Heart right ventricle (tissue), 16 donors: ENCODE measurements at regions of chr9 and their contacts with region 1.

Region 1: DNA sequence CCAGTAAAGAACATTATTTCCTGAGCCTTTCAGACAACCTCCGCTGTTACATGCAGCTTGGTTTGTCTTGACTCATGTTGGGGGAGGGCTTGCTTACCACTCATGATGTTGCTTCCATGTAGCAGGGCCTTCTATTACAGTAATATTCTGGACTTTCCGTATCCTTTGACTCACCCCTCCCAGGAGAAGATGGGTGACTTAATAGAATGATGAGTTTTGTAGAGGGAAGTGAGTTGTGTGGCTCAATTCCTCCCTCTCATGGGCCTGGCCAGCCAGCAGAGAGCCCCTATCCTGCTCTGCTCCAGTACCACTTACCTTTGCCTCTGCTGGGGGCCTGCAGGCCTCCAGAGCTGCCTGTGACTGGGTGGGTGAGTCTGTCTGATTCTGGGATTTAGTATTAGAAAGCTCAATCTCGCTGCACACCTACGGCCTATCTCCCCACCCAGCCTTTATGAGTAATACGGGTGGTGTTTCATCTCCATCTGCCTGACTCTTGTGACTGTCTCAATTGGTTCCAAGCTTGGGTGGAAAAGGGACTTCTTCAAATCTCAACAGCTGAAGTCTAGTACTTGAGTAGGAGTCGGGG is 52.6 kb upstream of the KLF9 start:
- DNase-seq: no peak
- ATAC-seq: peak in 2 of 8 donors; percentile 1 to 53
- H3K4me3 ChIP-seq: no peak overlapping the region
- H3K27ac ChIP-seq: peak overlapping the region in 3 of 10 donors; percentile 45 to 75 (median 65)
- H3K4me1 ChIP-seq: peaks cover 14 to 57% (median 36%) of the 10 kb centered on the region in 9 donors
- H3K27me3 ChIP-seq: no peaks in the 10 kb centered on the region
- CTCF ChIP-seq: peak in 1 of 9 donors; percentile 14

Region 2: DNA sequence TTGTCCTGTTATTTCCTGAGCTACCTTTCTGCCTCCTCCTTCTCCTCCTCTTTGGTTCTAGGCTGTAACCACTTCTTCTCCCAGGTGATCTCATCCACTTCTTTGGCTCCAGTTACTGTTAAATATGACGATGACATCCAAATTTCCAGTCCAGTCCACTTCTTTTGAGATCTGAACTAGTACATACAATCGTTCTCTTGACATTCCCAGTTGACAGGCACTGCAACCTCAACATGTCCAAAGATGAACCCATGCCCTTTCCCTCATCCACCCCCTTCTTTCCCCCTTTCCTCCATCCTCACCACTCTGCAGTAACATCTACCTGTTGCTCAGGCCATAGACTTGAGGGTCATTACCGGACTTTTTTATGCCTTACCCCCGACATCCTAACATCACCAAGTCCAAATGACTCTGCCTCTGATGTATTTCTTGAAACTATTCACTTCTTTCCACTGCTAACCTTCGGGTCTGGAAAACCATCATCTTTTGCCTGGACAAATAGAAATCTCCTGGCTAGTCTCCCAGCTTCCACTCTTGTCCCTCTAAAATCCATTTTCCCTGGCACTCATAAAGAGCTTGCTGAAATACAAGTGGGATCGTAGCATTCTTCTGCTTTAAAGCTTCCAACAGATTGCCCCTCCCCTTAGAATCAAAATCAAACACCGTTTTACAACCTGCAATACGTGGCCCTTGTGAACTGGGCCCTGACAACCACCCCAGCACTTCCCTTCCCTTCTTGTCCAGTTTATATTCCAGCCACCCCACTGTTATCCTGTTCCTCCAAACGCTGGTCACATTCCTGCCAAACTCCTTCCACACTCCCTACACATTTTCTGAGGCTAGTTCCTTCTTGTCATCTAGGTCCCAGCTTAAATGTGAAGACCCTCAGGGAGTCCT is 84.1 kb before region 1 on chr9:
- intact Hi-C with region 1: no loop called
- DNase-seq: no peak
- ATAC-seq: peak in 4 of 8 donors; percentile 16 to 41 (median 20)
- H3K4me3 ChIP-seq: no peak overlapping the region
- H3K27ac ChIP-seq: peak overlapping the region in 1 of 10 donors; percentile 3
- H3K4me1 ChIP-seq: peaks cover 3 to 65% (median 33%) of the 10 kb centered on the region in 9 donors
- H3K27me3 ChIP-seq: no peaks in the 10 kb centered on the region
- CTCF ChIP-seq: no peak

Region 3: GRCh38 chr9:70427161-70427945 is 39.7 kb before region 1 on chr9:
- intact Hi-C with region 1: loop called in 2 of 10 experiments (anchors 5 kb)
- DNase-seq: no peak
- ATAC-seq: peak in 2 of 8 donors; percentile 32 to 40
- H3K4me3 ChIP-seq: no peak overlapping the region
- H3K27ac ChIP-seq: no peak overlapping the region
- H3K4me1 ChIP-seq: peaks cover under 1 to 14% (median 6%) of the 10 kb centered on the region in 9 donors
- H3K27me3 ChIP-seq: no peaks in the 10 kb centered on the region
- CTCF ChIP-seq: no peak

Region 4: DNA sequence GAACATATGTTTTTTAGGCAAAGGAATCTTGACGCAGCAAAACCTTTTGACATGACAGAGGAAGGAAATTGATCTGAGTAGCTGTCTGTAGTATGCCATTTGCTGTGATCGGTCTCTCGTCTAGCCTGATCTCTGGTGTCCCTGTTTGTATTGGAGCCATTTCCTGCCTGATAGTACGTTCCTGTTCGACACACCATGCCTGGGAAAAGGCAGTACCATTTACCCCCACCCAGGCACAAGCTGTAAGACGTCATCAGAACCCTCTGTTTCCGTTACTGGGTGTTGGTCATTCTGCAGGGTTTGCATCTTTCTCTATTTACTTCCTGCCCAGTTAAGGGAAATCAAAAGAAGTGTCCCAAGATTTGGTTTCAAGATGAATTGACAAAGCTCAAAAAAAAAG is 1171.6 kb after region 1 on chr9:
- intact Hi-C with region 1: no loop called
- DNase-seq: peak in 1 of 2 donors; percentile 55
- ATAC-seq: peak; percentile 80 to 96 (median 90)
- H3K4me3 ChIP-seq: peak overlapping the region in 1 of 10 donors; percentile 15
- H3K27ac ChIP-seq: peak overlapping the region in 9 of 10 donors; percentile 31 to 82 (median 68)
- H3K4me1 ChIP-seq: peaks cover 0 to 54% (median 17%) of the 10 kb centered on the region in 9 donors
- H3K27me3 ChIP-seq: no peaks in the 10 kb centered on the region
- CTCF ChIP-seq: no peak